Cardiac septum (tissue), 1 donor: ENCODE measurements at regions of chr7 and their contacts with region 1.

Region 1: DNA sequence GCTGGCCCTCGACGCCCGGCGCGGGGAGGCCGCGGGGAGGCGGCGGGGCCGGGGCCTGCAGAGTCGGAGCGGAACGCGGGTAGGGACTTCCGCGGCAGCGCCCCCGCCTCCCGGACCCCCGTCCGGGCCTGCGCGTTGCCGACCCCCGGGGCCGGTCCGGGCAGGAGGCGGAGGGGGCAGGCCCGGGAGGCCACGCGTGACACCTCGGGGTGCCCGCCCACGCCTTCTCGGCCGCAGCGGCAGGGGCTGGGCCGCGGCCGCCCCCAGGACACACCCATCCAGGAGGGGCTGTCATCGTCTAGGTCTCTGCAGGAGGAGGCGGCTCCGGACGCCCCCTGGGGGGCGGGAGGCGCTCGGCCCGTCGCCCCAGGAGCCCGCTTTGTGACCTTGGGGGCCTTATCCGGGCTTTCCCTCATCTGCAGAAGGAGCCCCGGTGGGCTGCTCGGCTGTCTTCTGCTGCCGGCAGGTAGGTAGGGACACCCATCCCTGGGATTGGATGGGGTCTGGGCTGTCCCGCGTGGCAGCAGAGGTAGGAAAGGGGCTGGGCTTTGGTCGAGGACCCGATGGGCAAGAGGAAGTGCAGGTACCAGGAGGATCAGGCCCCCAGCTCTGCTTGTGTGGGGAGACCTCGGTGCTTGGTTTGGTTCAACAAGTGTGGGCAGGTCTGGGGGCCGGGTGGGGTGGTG is 569 bp downstream of the ZNF316 start:
- DNase-seq: no peak

Region 2: GRCh38 chr7:6516387-6516983 is 121.2 kb before region 1 on chr7:
- intact Hi-C with region 1: no loop called
- DNase-seq: peak; percentile 90

Region 3: GRCh38 chr7:6577365-6578113 is 60.1 kb before region 1 on chr7 and contains the start of gene ZDHHC4:
- intact Hi-C with region 1: loop called (anchors 5 kb)
- DNase-seq: peak; percentile 92
- total RNA-seq, gene ZDHHC4: 34.3 TPM

Region 4: GRCh38 chr7:6589829-6590644 is 47.6 kb before region 1 on chr7 and contains the start of gene INTS15:
- intact Hi-C with region 1: loop called (anchors 2 kb)
- DNase-seq: peak; percentile 87
- total RNA-seq, gene INTS15: 13.6 TPM

Region 5: GRCh38 chr7:6600093-6600492 is 37.6 kb before region 1 on chr7:
- intact Hi-C with region 1: no loop called
- DNase-seq: no peak

Region 6: DNA sequence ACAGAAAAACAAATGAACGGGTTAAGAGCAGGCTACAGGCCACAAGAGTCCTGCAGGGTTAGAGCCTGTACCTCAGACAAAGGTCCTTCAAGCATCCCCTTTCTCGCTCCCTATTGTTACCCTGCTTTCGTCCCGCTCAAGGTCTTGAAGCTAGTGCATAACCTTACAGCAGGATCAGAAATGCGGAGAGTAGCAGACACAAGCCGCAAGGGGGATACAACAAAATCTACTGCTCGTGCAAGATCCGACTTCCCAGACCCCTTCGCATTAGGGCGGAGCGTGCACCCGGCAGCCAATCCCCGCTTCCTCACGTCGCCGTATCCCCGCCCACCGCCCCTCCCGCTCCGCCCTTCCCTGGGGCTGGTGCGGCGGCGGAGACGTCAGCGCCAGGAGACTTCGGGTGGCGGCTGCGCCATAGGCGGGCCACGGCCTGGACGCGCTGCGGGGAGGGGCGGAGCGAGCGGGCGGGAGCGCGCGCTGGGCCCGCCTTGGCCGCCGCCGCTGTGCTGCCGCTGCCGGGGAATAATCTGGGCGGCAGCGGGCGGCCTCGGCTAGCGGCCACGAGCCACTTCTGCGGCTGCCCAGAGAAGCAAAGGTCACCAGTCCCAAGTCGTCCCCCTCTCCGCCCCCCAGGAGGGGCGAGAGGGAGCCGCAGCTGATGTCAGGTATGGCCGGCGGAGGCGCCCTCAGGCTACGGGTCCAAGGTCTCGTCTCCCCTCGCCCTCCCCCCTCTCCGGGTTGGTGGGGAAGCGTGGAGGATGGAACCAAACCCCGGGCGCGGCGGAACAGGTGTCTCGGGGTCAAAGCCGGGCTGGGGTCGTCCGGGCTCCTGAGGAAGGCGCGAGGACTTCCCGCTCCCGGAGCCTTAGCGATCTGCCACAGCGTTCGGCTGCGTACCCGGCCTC is 544.7 kb after region 1 on chr7 and contains the start of gene C1GALT1:
- intact Hi-C with region 1: loop called (anchors 10 kb)
- DNase-seq: peak; percentile 99
- total RNA-seq, gene C1GALT1: 20.6 TPM